ENCODE measurements at regions of chr19 and their contacts with region 1.

Region 1: GRCh38 chr19:4694209-4694987 is 24.3 kb upstream of the MYDGF start:
- DNase-seq: peak; percentile 100
- H3K4me3 ChIP-seq: no peak overlapping the region
- H3K27ac ChIP-seq: peak overlapping the region; percentile 86
- H3K4me1 ChIP-seq: peaks cover 44% of the 10 kb centered on the region
- H3K27me3 ChIP-seq: no peaks in the 10 kb centered on the region
- CTCF ChIP-seq: no peak

Region 2: DNA sequence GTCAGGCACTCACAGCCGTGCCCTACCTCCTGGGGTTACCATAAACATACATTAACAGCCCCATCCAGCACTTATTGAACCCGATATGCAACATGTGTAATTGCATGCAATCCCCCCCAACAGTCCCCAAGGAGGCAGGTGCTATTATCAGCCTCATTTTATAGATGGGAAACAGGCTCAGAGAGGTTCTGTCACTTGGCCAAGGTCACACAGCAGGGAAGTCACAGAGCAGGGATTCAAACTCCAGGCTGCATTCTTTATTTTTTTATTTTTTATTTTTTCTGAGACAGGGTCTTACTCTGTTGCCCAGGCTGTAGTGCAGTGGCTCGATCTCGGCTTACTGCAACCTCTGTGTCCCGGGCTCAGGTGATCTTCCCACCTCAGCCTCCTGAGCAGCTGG is 93.5 kb before region 1 on chr19:
- CTCF ChIA-PET with region 1: no interaction called
- dilution Hi-C with region 1: loop called (anchors 5 kb)
- in situ Hi-C with region 1: no loop called
- intact Hi-C with region 1: no loop called
- DNase-seq: no peak
- H3K4me3 ChIP-seq: no peak overlapping the region
- H3K27ac ChIP-seq: no peak overlapping the region
- H3K4me1 ChIP-seq: peaks cover 6% of the 10 kb centered on the region
- H3K27me3 ChIP-seq: peaks cover 2% of the 10 kb centered on the region
- CTCF ChIP-seq: no peak

Region 3: GRCh38 chr19:4647676-4648644 is 46.4 kb before region 1 on chr19:
- CTCF ChIA-PET with region 1: no interaction called
- dilution Hi-C with region 1: loop called (anchors 5 kb)
- in situ Hi-C with region 1: no loop called
- intact Hi-C with region 1: no loop called
- DNase-seq: no peak
- H3K4me3 ChIP-seq: no peak overlapping the region
- H3K27ac ChIP-seq: no peak overlapping the region
- H3K4me1 ChIP-seq: no peaks in the 10 kb centered on the region
- H3K27me3 ChIP-seq: no peaks in the 10 kb centered on the region
- CTCF ChIP-seq: no peak

Region 4: GRCh38 chr19:4669723-4670480 is 24.5 kb before region 1 on chr19 and contains the start of gene MYDGF:
- CTCF ChIA-PET with region 1: interaction called, 3 read pairs
- dilution Hi-C with region 1: no loop called
- in situ Hi-C with region 1: no loop called
- intact Hi-C with region 1: loop called (anchors 2 kb)
- DNase-seq: peak; percentile 81
- H3K4me3 ChIP-seq: peak within 1 kb of the TSS; percentile 71 to 97 (median 85)
- H3K27ac ChIP-seq: peak within 1 kb of the TSS; percentile 59
- H3K4me1 ChIP-seq: peaks cover 14% of the 10 kb centered on the region
- H3K27me3 ChIP-seq: no peaks in the 10 kb centered on the region
- CTCF ChIP-seq: no peak
- total RNA-seq, gene MYDGF: 57.7 to 105 TPM

Region 5: DNA sequence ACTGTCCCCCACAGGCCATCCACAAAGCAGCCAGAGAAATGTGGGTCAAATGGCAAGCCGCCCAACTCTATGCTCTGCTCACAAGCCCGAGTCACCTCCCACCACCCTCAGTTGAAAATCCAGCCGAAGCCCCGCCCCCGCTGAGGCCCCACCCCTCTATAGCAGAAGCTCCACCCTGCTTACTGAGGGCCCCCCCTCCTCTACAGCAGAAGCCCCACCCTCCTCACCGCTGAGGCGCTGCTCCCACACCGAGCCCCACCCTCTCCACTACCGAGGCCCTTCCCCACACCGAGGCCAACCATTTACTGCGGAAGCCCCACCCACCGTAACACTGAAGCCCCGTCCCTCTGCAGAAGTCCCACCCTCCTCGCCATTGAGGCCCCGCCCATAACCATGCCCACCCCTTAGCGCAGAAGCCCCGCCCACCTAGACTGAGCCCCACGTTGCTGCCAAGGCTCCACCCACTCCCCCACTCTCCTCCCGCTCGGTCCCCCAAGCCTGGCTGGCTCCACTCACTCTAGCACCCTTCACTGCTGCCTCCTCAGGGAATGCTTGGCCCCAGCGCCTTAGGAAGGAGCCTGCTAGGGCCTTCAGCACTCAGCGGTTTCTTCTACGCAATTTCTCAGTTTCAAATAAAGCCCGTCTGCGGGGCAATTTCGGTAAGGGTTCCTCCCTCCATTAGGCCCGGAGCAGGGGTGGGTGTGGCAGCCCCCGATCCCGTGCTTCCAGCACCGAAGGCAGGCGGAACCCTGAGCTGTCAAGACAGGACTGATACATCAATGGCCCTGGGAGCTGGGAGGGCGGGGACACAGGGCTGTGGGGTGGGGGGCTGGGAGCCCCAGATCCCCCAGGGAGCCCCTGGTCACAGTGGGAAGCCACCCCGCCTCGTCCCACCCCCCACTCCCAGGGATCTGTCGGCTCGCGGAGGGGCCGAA is 15.2 kb before region 1 on chr19:
- CTCF ChIA-PET with region 1: no interaction called
- dilution Hi-C with region 1: no loop called
- in situ Hi-C with region 1: no loop called
- intact Hi-C with region 1: loop called (anchors 2 kb)
- DNase-seq: no peak
- H3K4me3 ChIP-seq: no peak overlapping the region
- H3K27ac ChIP-seq: no peak overlapping the region
- H3K4me1 ChIP-seq: no peaks in the 10 kb centered on the region
- H3K27me3 ChIP-seq: no peaks in the 10 kb centered on the region
- CTCF ChIP-seq: no peak

Region 6: DNA sequence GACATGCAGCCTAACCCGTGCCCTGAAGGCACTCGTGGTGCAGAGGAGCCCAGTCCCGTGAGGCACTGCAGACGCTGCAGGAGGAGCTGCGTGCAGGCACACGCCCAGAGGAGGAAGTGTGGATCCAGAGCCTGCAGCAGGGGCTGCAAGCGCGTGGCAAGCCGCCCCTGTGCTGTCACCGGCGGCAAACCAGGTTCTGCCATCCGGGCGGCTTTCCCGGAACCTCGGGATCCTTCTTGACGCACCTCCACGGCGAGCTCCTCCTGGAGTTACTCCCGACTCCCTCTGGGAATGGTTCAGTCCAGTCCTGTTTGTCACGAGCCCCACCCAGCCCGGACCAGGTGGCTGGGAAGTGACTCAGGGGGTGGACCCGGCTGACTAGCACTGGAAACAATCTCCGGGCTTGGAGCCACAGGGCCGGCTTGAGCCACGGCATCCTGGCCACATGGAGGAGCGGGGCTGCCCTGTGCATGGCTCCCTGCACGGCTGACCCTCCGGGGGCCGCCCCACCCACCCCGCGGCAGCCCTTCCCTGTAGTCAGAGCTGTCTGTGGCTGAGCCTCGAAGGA is 19.1 kb after region 1 on chr19:
- CTCF ChIA-PET with region 1: no interaction called
- dilution Hi-C with region 1: no loop called
- in situ Hi-C with region 1: no loop called
- intact Hi-C with region 1: loop called (anchors 1 kb)
- DNase-seq: peak; percentile 99
- H3K4me3 ChIP-seq: no peak overlapping the region
- H3K27ac ChIP-seq: peak overlapping the region; percentile 52
- H3K4me1 ChIP-seq: peaks cover 70% of the 10 kb centered on the region
- H3K27me3 ChIP-seq: no peaks in the 10 kb centered on the region
- CTCF ChIP-seq: no peak